Naive thymus-derived CD4-positive, alpha-beta T cell (primary cell): ENCODE measurements at regions of chr12 and their contacts with region 1.

Region 1: DNA sequence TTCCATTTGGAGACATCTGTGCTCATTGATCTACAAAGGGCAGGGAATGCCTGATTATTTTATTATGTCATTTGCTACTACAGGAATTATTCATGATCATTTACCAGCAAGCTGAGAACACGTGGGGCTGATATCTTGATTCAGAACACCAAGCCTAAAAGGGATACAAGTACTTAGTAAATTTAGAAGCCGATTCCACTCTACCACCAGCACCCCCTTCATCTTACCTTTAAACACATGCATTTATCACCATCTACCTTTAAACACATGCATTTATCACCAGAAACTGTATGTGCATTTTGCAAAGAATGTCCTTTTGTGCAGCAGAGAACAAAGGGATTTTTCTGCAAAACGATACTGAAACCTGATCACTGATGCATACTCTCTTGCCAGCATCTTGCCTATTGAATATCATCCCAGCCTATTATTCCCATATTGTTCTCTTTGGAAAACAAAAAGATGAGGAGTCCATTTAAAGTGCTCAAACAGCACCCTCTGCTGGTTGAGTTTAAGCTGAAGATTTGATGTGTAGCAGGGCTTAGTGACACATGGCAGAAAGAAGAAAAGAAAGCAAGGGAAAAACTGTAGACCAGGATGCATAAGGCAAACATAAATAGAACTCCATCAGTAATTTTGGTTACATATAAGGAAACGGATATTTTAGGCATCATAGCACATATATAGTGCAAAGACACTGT is 132.6 kb upstream of the PLEKHG7 start:
- DNase-seq: peak in 7 of 9 donors; percentile 67 to 86 (median 80)
- ATAC-seq: peak; percentile 92
- H3K4me3 ChIP-seq: no peak overlapping the region
- H3K4me3 Mint-ChIP-seq: no peak overlapping the region
- H3K27ac ChIP-seq: peak overlapping the region; percentile 52
- H3K27ac Mint-ChIP-seq: no peak overlapping the region
- H3K4me1 ChIP-seq: peaks cover 11 to 13% of the 10 kb centered on the region in 2 donors
- H3K4me1 Mint-ChIP-seq: peaks cover 0 to 37% (median 6%) of the 10 kb centered on the region in 7 donors
- H3K27me3 ChIP-seq: no peaks in the 10 kb centered on the region
- H3K27me3 Mint-ChIP-seq: no peaks in the 10 kb centered on the region

Region 2: GRCh38 chr12:91382081-91382543 is 1188.1 kb before region 1 on chr12:
- CTCF ChIA-PET with region 1: interaction called, 56 read pairs
- POLR2A ChIA-PET with region 1: interaction called, 14 read pairs
- intact Hi-C with region 1: loop called (anchors 1 kb)
- DNase-seq: peak; percentile 67 to 89 (median 78)
- ATAC-seq: peak; percentile 94
- H3K4me3 ChIP-seq: peak overlapping the region; percentile 18
- H3K4me3 Mint-ChIP-seq: peak overlapping the region; percentile 69 to 91 (median 81)
- H3K27ac ChIP-seq: no peak overlapping the region
- H3K27ac Mint-ChIP-seq: peak overlapping the region in 8 of 9 donors; percentile 16 to 85 (median 49)
- H3K4me1 ChIP-seq: no peaks in the 10 kb centered on the region
- H3K4me1 Mint-ChIP-seq: peaks cover 0 to 11% (median 6%) of the 10 kb centered on the region in 7 donors
- H3K27me3 ChIP-seq: no peaks in the 10 kb centered on the region
- H3K27me3 Mint-ChIP-seq: peaks cover 0 to 13% (median 0%) of the 10 kb centered on the region in 5 donors

Region 3: DNA sequence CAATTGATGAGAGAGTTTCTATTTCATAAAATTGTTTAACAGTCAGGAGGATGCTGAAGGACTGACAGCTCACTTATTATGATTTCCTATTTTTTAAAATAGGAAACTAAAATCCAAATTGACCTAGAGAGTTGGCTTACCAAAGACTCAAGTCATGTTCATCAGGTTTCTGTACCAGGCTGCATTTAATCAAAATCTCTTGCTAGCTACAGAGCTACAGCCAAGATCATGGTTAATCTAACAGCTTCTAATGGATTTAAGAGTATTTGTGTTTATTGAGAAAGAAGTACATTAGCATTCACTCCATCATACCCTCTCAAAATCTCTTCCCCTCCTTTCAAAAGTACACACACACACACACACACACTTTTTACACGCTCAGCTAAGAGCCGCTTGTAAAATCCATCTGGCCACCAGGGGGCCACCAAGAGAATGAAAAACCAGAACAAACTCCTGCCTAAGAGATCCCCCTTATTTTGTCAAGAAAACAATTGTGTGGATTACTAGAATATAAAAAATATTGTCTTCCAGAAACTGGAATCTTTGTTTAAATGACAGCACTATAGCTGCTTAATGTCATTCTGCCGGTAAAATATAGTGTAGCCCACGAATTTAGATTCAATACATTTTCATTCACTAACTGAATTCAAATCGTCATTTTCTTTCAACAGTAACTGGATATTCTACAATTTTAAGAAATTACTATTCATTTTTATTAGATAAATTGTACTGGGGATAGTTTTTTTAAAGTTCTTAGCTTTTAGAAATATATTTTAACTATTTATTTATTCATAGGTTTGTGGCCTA is 758.5 kb before region 1 on chr12:
- CTCF ChIA-PET with region 1: interaction called, 3 read pairs
- POLR2A ChIA-PET with region 1: interaction called, 4 read pairs
- intact Hi-C with region 1: loop called (anchors 1 to 2 kb)
- DNase-seq: peak; percentile 64 to 79 (median 70)
- ATAC-seq: peak; percentile 90
- H3K4me3 ChIP-seq: peak overlapping the region; percentile 37
- H3K4me3 Mint-ChIP-seq: peak overlapping the region in 9 of 10 donors; percentile 31 to 80 (median 52)
- H3K27ac ChIP-seq: peak overlapping the region; percentile 22
- H3K27ac Mint-ChIP-seq: peak overlapping the region in 8 of 9 donors; percentile 81 to 97 (median 86)
- H3K4me1 ChIP-seq: peaks cover 0 to 15% of the 10 kb centered on the region in 2 donors
- H3K4me1 Mint-ChIP-seq: peaks cover 10 to 48% (median 35%) of the 10 kb centered on the region in 7 donors
- H3K27me3 ChIP-seq: no peaks in the 10 kb centered on the region
- H3K27me3 Mint-ChIP-seq: no peaks in the 10 kb centered on the region

Region 4: DNA sequence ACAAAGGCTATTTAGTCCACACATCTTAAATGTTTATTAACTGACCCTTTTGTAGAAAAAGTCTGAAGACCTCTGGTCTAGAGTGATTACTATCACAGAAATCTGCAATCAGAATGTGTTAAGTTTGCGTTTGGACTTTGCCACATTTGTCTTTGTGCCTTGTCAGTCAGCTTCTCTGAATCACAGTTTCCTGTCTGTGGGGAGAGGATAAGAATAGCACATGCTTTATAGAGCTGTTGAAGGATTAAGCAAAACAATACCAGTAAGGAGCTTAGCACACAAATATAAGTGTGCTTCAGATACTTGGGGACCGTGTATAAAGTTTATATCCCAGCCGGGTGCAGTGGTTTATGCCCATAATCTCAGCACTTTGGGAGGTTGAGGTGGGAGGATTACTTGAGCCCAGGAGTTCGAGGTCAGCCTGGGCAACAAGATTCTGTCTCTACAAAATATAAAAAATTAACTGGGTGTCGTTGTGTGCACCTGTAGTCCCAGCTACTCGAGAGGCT is 361.5 kb before region 1 on chr12:
- CTCF ChIA-PET with region 1: no interaction called
- POLR2A ChIA-PET with region 1: interaction called, 3 read pairs
- intact Hi-C with region 1: loop called in 1 of 2 experiments (anchors 1 kb)
- DNase-seq: peak in 7 of 9 donors; percentile 55 to 76 (median 63)
- ATAC-seq: peak; percentile 92
- H3K4me3 ChIP-seq: peak overlapping the region; percentile 29
- H3K4me3 Mint-ChIP-seq: peak overlapping the region; percentile 58 to 90 (median 76)
- H3K27ac ChIP-seq: peak overlapping the region; percentile 48
- H3K27ac Mint-ChIP-seq: peak overlapping the region; percentile 72 to 97 (median 95)
- H3K4me1 ChIP-seq: peaks cover 18 to 25% of the 10 kb centered on the region in 2 donors
- H3K4me1 Mint-ChIP-seq: peaks cover 19 to 55% (median 41%) of the 10 kb centered on the region in 7 donors
- H3K27me3 ChIP-seq: no peaks in the 10 kb centered on the region
- H3K27me3 Mint-ChIP-seq: no peaks in the 10 kb centered on the region

Region 5: GRCh38 chr12:92505254-92506231 is 64.7 kb before region 1 on chr12:
- CTCF ChIA-PET with region 1: interaction called, 7 read pairs
- POLR2A ChIA-PET with region 1: interaction called, 4 read pairs
- intact Hi-C with region 1: loop called (anchors 1 to 2 kb)
- DNase-seq: peak; percentile 11 to 71 (median 50)
- ATAC-seq: peak; percentile 66
- H3K4me3 ChIP-seq: peak overlapping the region; percentile 48
- H3K4me3 Mint-ChIP-seq: peak overlapping the region; percentile 80 to 93 (median 87)
- H3K27ac ChIP-seq: peak overlapping the region; percentile 73
- H3K27ac Mint-ChIP-seq: peak overlapping the region; percentile 89 to 99 (median 96)
- H3K4me1 ChIP-seq: peaks cover 17 to 28% of the 10 kb centered on the region in 2 donors
- H3K4me1 Mint-ChIP-seq: peaks cover 15 to 48% (median 30%) of the 10 kb centered on the region in 7 donors
- H3K27me3 ChIP-seq: no peaks in the 10 kb centered on the region
- H3K27me3 Mint-ChIP-seq: no peaks in the 10 kb centered on the region

Region 6: GRCh38 chr12:92649511-92650227 is 79.5 kb after region 1 on chr12:
- CTCF ChIA-PET with region 1: interaction called, 5 read pairs
- POLR2A ChIA-PET with region 1: interaction called, 3 read pairs
- intact Hi-C with region 1: loop called (anchors 1 kb)
- DNase-seq: peak; percentile 8 to 70 (median 58)
- ATAC-seq: peak; percentile 96
- H3K4me3 ChIP-seq: no peak overlapping the region
- H3K4me3 Mint-ChIP-seq: peak overlapping the region in 1 of 10 donors; percentile 21
- H3K27ac ChIP-seq: no peak overlapping the region
- H3K27ac Mint-ChIP-seq: peak overlapping the region in 6 of 9 donors; percentile 7 to 79 (median 20)
- H3K4me1 ChIP-seq: no peaks in the 10 kb centered on the region
- H3K4me1 Mint-ChIP-seq: peaks cover 4 to 11% (median 6%) of the 10 kb centered on the region in 7 donors
- H3K27me3 ChIP-seq: no peaks in the 10 kb centered on the region
- H3K27me3 Mint-ChIP-seq: no peaks in the 10 kb centered on the region